Right ventricle myocardium superior (tissue), 1 donor: ENCODE measurements at regions of chr11 and their contacts with region 1.

Region 1: DNA sequence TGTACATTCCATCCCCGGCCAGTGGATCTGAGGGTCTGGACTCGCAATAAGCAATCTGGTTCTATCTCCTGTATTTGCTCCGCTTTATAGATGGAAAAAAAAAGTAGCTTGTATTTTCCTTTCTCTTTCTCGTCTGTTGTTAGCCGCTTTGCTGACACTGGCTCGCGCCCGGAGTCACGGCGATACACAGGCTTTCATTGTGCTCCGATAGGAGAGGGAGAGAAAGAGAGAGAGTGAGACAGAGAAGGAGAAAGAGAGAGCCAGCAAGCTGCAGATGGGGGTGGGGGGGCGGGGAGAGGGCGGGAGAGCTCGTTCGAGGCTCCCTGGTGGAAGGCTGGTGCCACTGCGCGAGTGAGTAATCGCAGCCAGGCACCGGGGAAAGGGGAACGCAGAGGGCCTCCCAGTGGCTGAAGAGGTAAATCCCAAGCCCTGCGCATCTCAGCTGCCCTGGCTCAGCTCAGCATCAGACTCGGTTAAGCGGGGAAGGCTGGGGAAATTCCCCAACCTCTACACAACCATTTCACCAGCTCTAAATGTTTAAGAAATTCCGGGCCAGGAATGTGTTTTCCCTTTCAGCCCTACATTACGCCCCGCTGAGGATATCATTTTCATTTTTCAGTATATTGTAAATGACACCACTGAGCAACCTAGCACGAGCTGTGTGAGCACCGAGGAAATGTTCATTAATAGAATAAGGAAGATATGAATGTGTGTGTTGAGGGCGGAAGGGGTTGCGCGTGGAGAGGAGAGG is at the start of gene MAML2:
- DNase-seq: peak; percentile 95
- ATAC-seq: peak; percentile 95
- total RNA-seq, gene MAML2: 4.5 TPM

Region 2: GRCh38 chr11:95835768-95836488 is 507.2 kb before region 1 on chr11:
- intact Hi-C with region 1: loop called (anchors 5 kb)
- DNase-seq: peak; percentile 47
- ATAC-seq: peak; percentile 98

Region 3: DNA sequence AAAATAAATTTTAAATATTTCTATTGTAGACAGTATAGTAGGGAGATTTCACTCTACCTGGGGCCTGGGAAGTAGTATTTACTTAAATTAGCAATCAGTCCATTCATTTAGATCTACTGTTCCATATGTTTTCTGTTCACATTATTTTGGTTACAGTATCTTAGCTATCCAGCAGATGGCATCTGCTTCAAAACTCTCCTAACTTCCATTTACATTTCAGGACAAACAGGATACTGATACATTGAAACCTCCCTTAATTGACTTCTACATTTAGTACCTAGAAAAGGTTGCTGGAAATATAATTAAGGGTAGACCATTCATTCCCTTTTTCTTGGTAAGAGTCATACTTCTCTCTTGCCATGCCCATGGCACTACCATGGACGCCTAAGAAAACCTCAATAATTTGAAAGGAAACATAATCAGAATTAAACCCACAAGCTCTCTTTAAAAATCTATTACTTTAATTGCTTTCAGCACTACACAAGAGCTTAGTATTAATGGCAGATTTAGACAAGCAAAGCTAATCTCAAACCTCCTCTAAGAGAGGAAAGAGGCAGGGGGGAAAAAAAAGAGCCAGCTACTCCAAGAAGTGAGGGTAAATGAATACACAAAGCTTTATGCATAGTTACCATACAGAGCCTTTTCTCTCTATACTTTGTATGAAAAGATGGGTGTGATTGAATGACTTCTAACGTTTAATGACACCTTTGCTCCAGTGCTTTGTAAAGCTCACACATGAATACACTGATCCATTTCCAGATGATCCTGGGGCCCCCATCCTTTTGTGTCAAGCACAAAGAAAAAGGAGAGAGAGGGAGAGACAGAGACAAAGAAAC is 288.0 kb before region 1 on chr11:
- intact Hi-C with region 1: loop called (anchors 2 kb)
- DNase-seq: no peak
- ATAC-seq: peak; percentile 66